IMR-90 (cell line): ENCODE measurements at regions of chr17 and their contacts with region 1.

Region 1: DNA sequence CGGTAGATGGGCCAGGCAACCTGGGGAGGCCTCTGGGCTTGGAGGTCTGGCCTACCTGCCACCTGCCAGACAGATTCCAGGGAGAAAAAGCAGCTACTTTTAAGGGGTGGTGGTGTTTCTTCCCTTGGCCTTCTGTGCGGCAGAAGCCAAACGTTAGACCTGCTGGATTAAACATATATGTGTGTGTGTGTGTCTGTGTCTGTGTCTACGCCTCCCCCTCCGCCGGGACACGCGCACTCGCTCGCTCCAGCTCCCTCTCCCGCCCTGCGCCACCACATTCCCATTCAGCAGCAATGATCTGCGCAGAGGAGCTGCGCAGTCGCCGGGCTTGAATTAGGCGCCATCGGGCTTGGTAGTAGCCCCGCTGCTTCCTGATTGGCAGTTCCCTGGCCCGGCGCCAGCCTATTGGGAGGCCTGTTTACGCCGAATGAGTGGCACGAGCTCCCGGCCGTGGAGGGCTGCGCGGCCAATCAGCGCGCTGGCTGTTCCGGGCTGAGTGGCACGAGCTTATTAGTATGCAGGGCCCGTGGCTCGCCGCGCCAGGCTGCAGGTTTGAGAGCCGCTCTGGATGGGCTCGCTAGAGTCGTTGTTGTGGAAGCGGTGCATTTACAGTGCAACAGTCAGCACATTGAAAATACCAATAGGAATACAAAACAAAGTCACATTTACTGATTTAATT is at the start of gene BAHCC1:
- DNase-seq: peak; percentile 100
- ATAC-seq: peak; percentile 62
- H3K4me3 ChIP-seq: peak within 1 kb of the TSS; percentile 57
- H3K27ac ChIP-seq: peak within 1 kb of the TSS; percentile 90
- H3K4me1 ChIP-seq: peaks cover 18% of the 10 kb centered on the region
- H3K27me3 ChIP-seq: no peaks in the 10 kb centered on the region
- CTCF ChIP-seq: 0 out of 2 replicates have a peak, but pooled peaks have one; percentile 0
- POLR2A ChIP-seq: peak; percentile 94
- RAD21 ChIP-seq: no peak
- total RNA-seq, gene BAHCC1: 0.36 and 0.83 TPM in 2 replicates

Region 2: GRCh38 chr17:81253358-81254131 is 141.5 kb before region 1 on chr17:
- CTCF ChIA-PET with region 1: interaction called, 5 read pairs
- POLR2A ChIA-PET with region 1: interaction called, 5 read pairs
- dilution Hi-C with region 1: no loop called
- in situ Hi-C with region 1: no loop called
- intact Hi-C with region 1: loop called (anchors 2 kb)
- DNase-seq: peak; percentile 31
- ATAC-seq: peak; percentile 60
- H3K4me3 ChIP-seq: no peak overlapping the region
- H3K27ac ChIP-seq: no peak overlapping the region
- H3K4me1 ChIP-seq: peaks cover 12% of the 10 kb centered on the region
- H3K27me3 ChIP-seq: no peaks in the 10 kb centered on the region
- CTCF ChIP-seq: peak; percentile 85
- POLR2A ChIP-seq: 0 out of 2 replicates have a peak, but pooled peaks have one; percentile 41
- RAD21 ChIP-seq: peak; percentile 96

Region 3: GRCh38 chr17:81294856-81295680 is 100.0 kb before region 1 on chr17 and contains the start of gene SLC38A10:
- CTCF ChIA-PET with region 1: no interaction called
- POLR2A ChIA-PET with region 1: no interaction called
- dilution Hi-C with region 1: no loop called
- in situ Hi-C with region 1: no loop called
- intact Hi-C with region 1: loop called (anchors 1 kb)
- DNase-seq: peak; percentile 74
- ATAC-seq: peak; percentile 94
- H3K4me3 ChIP-seq: peak within 1 kb of the TSS; percentile 73
- H3K27ac ChIP-seq: peak within 1 kb of the TSS; percentile 90
- H3K4me1 ChIP-seq: peaks cover 4% of the 10 kb centered on the region
- H3K27me3 ChIP-seq: no peaks in the 10 kb centered on the region
- CTCF ChIP-seq: no peak
- POLR2A ChIP-seq: peak; percentile 91
- RAD21 ChIP-seq: no peak
- total RNA-seq, gene SLC38A10: 12.7 and 14.2 TPM in 2 replicates

Region 4: GRCh38 chr17:81346090-81346907 is 48.8 kb before region 1 on chr17:
- CTCF ChIA-PET with region 1: interaction called, 4 read pairs
- POLR2A ChIA-PET with region 1: no interaction called
- dilution Hi-C with region 1: no loop called
- in situ Hi-C with region 1: no loop called
- intact Hi-C with region 1: loop called (anchors 1 kb)
- DNase-seq: peak; percentile 94
- ATAC-seq: peak; percentile 80
- H3K4me3 ChIP-seq: peak overlapping the region; percentile 76
- H3K27ac ChIP-seq: peak overlapping the region; percentile 78
- H3K4me1 ChIP-seq: peaks cover 7% of the 10 kb centered on the region
- H3K27me3 ChIP-seq: no peaks in the 10 kb centered on the region
- CTCF ChIP-seq: no peak
- POLR2A ChIP-seq: peak; percentile 65; the same call in 1 of the 2 replicates
- RAD21 ChIP-seq: peak; percentile 3; the same call in 1 of the 2 replicates

Region 5: DNA sequence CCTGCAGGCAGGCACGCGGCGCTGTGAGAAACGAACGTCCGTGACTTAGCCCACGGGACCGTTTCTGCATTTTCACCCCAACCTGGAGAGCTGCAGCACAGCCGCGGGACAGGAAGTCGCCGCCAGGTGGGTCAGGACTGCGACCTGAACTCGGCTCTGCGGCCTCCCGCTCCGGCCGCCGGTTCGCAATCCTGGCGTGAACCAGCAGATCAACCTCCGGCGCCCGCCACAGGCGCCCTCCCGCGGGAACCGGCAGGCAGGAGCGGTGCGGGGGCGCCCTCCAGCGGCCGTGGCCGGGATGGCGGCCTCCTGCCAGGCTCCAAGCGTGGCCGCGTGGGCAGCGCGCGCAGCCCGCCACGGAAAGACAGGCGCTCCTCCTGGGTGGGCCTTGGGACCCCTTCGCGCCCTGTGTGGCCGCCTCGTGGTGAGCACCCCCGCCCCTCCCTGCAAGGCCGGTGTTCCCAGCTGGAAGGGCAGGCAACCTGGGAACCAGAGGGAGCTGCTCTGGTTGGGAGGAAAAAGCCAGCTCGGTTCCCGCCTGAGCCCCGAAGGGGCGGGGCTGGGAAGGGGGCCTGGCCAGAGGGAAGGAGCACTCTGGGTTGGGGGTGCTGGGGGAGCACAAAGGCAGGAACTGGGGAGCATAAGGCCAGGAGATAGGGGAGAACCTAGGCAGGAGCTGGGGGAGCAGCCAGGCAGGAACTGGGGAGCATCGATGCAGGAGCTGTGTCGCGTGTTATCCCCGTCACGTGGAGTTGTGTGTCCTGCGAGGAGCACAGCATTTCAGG is 89.3 kb after region 1 on chr17:
- CTCF ChIA-PET with region 1: interaction called, 5 read pairs
- POLR2A ChIA-PET with region 1: interaction called, 3 read pairs
- dilution Hi-C with region 1: no loop called
- in situ Hi-C with region 1: no loop called
- intact Hi-C with region 1: loop called (anchors 1 kb)
- DNase-seq: peak; percentile 71
- ATAC-seq: peak; percentile 79
- H3K4me3 ChIP-seq: peak overlapping the region; percentile 45
- H3K27ac ChIP-seq: peak overlapping the region; percentile 50; the same call in 1 of the 2 replicates
- H3K4me1 ChIP-seq: peaks cover 14% of the 10 kb centered on the region
- H3K27me3 ChIP-seq: no peaks in the 10 kb centered on the region
- CTCF ChIP-seq: peak; percentile 99
- POLR2A ChIP-seq: no peak
- RAD21 ChIP-seq: peak; percentile 97

Region 6: DNA sequence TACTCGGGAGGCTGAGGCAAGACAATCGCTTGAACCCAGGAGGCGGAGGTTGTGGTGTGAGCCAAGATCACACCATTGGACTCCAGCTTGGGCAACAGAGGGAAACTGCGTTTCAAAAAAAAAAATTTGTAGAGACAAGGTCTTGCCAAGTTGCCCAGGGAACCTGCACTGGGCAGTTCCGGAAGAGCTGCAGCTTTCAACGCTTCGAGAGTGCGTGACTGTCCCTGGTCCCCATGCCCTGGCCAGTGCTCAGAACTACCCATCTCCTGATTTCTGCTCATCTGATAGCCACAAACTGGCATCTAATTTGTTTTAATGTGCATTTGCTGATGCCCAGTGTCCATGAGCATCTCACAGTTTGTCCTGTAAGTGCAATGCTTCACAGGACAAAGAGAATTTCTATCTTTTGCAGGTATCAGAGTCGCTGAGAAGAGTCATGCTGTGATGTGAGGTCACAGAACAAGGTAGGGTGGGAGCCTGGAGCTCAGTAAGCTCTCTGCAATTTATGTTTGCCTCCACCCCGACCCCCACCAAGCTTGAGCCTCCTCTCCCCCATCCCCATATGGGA is 113.7 kb after region 1 on chr17:
- CTCF ChIA-PET with region 1: no interaction called
- POLR2A ChIA-PET with region 1: interaction called, 4 read pairs
- dilution Hi-C with region 1: no loop called
- in situ Hi-C with region 1: no loop called
- intact Hi-C with region 1: loop called (anchors 1 kb)
- DNase-seq: peak; percentile 52
- ATAC-seq: 0 out of 2 replicates have a peak, but pooled peaks have one; percentile 0
- H3K4me3 ChIP-seq: peak overlapping the region; percentile 79
- H3K27ac ChIP-seq: no peak overlapping the region
- H3K4me1 ChIP-seq: no peaks in the 10 kb centered on the region; the same call in 1 of the 2 replicates
- H3K27me3 ChIP-seq: no peaks in the 10 kb centered on the region
- CTCF ChIP-seq: no peak
- POLR2A ChIP-seq: peak; percentile 58; the same call in 1 of the 2 replicates
- RAD21 ChIP-seq: no peak